HEK293 (cell line): ENCODE measurements at regions of chr1 and their contacts with region 1.

Region 1: DNA sequence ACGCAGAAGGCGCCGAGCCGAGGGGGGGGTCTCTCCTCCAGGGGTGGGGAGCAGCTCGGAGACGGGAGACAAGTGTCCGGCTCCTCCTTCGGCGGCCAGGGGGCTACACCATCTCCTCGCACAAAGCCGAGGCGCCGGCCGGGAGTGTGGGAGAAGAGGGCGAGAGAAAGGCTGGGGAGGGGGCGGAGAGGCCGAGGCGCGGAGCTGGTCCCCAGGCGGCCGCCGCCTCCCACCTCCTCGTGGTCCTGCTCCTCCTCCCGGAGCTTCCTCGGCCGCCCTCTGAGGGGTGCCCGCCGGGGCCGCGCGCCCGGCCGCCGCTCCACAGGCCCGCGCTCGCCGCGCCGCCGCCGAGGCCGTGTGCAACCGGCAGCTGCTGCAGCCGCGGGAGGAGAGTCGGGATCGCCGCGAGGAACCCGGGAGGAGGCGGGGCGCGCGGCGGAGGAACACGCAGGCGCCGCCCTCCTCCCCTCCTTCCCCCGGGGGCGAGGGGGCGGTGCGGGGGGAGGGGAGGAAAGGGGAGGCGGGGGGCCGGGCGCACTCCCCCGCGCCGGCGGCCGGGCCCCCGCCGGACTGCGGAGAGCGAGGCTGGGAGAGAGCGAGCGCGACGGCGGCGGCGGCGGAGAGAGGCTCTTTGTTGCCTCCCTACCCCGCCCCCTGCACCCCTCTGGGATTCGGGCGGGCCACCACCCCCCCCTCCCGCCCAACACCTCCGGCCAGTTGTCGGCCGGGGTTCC is at the start of gene ENAH:
- H3K4me3 ChIP-seq: peak within 1 kb of the TSS; percentile 92
- H3K27ac ChIP-seq: peak within 1 kb of the TSS; percentile 100
- H3K4me1 ChIP-seq: peaks cover 59% of the 10 kb centered on the region
- CTCF ChIP-seq: peak; percentile 74

Region 2: DNA sequence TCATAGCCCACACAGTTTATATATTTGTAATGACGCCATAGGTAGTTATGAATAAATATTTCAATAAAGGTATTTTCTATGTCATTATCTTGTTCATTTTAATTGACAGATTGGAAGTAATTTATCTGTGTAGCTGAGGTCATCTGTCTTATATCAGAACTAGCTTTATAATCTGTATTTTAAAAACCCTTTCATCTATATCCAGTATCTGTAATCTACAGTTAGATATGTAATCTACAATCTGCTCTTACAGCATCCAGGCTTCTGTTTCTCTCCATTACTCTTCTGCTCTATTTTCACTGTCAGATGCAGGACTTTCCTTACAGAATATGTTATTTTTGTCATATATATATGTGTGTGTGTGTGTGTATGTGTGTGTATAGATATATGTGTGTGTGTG is 362.7 kb before region 1 on chr1:
- CTCF ChIA-PET with region 1: no interaction called
- POLR2A ChIA-PET with region 1: no interaction called
- H3K4me3 ChIP-seq: no peak overlapping the region
- H3K27ac ChIP-seq: no peak overlapping the region
- H3K4me1 ChIP-seq: no peaks in the 10 kb centered on the region
- CTCF ChIP-seq: no peak

Region 3: GRCh38 chr1:225666495-225666894 is 13.6 kb after region 1 on chr1:
- CTCF ChIA-PET with region 1: interaction called, 5 read pairs
- POLR2A ChIA-PET with region 1: interaction called, 12 read pairs
- H3K4me3 ChIP-seq: no peak overlapping the region
- H3K27ac ChIP-seq: no peak overlapping the region
- H3K4me1 ChIP-seq: no peaks in the 10 kb centered on the region
- CTCF ChIP-seq: no peak

Region 4: GRCh38 chr1:225700164-225700740 is 47.4 kb after region 1 on chr1:
- CTCF ChIA-PET with region 1: interaction called, 10 read pairs
- POLR2A ChIA-PET with region 1: interaction called, 34 read pairs
- H3K4me3 ChIP-seq: no peak overlapping the region; the same call in 1 of the 2 replicates
- H3K27ac ChIP-seq: no peak overlapping the region; the same call in 1 of the 2 replicates
- H3K4me1 ChIP-seq: peaks cover 25% of the 10 kb centered on the region
- CTCF ChIP-seq: no peak

Region 5: GRCh38 chr1:225735252-225736149 is 82.6 kb after region 1 on chr1:
- CTCF ChIA-PET with region 1: interaction called, 3 read pairs
- POLR2A ChIA-PET with region 1: interaction called, 23 read pairs
- H3K4me3 ChIP-seq: no peak overlapping the region
- H3K27ac ChIP-seq: no peak overlapping the region
- H3K4me1 ChIP-seq: peaks cover 17% of the 10 kb centered on the region
- CTCF ChIP-seq: 0 out of 2 replicates have a peak, but pooled peaks have one; percentile 16

Region 6: DNA sequence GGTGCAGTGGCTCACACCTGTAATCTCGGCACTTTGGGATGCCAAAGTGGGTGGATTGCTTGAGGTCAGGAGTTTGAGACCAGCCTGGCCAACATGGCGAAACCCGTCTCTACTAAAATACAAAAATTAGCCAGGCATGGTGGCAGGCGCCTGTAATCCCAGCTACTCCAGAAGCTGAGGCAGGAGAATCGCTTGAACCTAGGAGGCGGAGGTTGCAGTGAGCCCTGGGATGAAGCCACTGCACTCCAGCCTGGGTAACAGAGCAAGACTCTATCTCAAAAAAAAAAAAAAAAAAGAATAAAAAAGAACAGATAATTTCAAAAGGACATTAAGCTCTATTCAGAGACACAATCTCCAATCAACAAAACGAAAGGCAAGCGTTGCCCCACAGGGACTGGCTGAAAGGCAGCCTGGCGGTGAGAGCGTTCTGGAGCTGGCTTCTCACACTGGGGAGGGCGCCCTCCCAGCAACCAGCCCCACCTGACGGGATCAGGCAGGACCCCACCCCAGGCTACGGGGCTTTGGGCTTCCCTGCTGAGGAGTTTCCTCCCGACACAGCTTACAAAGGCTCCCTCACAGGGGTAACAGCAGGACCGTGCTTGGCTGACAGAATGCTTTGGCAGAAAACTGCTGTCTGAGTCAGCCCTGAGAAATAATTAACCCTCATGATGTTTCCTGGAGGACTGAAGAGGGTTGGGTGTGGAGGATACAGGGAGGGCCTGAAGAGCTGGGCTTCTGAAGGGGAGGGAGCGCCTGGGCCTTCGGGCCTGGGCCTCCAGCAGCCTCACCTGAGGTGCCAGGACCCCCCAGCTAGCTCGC is 93.7 kb after region 1 on chr1:
- CTCF ChIA-PET with region 1: interaction called, 4 read pairs
- POLR2A ChIA-PET with region 1: interaction called, 10 read pairs
- H3K4me3 ChIP-seq: peak overlapping the region; percentile 3
- H3K27ac ChIP-seq: peak overlapping the region; percentile 35
- H3K4me1 ChIP-seq: no peaks in the 10 kb centered on the region
- CTCF ChIP-seq: peak; percentile 51; the same call in 1 of the 2 replicates

Region 7: DNA sequence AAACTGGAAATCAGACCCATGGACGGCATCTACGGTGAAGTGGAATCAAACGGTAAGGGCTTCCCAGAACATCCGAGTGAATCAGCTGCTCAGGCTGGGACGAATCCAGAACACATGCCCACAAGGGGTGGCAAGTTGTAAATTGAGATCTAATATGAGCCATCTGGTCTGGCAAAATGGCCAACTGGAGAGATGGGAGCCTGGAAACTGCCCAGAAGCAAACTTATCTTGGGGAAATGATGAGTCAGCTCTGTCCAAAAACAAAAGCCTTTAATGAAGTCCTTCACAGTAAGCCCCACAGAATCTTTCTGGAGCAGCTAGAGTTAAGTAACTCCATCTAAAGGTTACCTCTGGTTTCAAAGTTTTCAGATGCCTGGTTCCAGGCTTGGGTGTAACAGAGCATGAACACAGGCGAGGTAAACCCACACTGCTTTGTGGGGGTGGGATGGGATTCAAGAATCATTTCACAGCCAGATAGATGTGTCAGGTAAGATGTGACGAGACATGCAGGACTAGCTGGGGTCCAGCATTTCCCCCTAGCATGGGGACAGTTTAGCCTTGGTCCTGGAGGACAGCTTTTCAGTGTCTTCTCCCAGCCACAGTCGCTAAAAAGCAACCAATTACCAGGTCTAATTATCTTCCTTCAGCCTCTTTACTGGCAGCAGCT is 114.2 kb after region 1 on chr1:
- CTCF ChIA-PET with region 1: interaction called, 27 read pairs
- POLR2A ChIA-PET with region 1: interaction called, 41 read pairs
- H3K4me3 ChIP-seq: no peak overlapping the region
- H3K27ac ChIP-seq: peak overlapping the region; percentile 29; the same call in 1 of the 2 replicates
- H3K4me1 ChIP-seq: peaks cover 37% of the 10 kb centered on the region
- CTCF ChIP-seq: no peak

Region 8: GRCh38 chr1:226074046-226074445 is 421.1 kb after region 1 on chr1:
- CTCF ChIA-PET with region 1: no interaction called
- POLR2A ChIA-PET with region 1: no interaction called
- H3K4me3 ChIP-seq: no peak overlapping the region
- H3K27ac ChIP-seq: no peak overlapping the region
- H3K4me1 ChIP-seq: no peaks in the 10 kb centered on the region
- CTCF ChIP-seq: no peak